Activated T-helper 2 cell treated with anti-CD3 and anti-CD28 coated beads, Interferon-gamma antibody, Interleukin-2, Interleukin-4, amounts not matched to agents 10 μg/mL and 5 μg/mL and 100 μg/mL, durations not matched to agents 14 hours and 24 hours and 36 hours (primary cell): ENCODE measurements at regions of chr3 and their contacts with region 1.

Region 1: GRCh38 chr3:42118762-42119361 is 27.7 kb downstream of the TRAK1 start:
- DNase-seq: no peak
- H3K4me3 Mint-ChIP-seq: no peak overlapping the region
- H3K27ac Mint-ChIP-seq: no peak overlapping the region
- H3K4me1 Mint-ChIP-seq: peaks cover 25% of the 10 kb centered on the region
- H3K27me3 Mint-ChIP-seq: no peaks in the 10 kb centered on the region

Region 2: DNA sequence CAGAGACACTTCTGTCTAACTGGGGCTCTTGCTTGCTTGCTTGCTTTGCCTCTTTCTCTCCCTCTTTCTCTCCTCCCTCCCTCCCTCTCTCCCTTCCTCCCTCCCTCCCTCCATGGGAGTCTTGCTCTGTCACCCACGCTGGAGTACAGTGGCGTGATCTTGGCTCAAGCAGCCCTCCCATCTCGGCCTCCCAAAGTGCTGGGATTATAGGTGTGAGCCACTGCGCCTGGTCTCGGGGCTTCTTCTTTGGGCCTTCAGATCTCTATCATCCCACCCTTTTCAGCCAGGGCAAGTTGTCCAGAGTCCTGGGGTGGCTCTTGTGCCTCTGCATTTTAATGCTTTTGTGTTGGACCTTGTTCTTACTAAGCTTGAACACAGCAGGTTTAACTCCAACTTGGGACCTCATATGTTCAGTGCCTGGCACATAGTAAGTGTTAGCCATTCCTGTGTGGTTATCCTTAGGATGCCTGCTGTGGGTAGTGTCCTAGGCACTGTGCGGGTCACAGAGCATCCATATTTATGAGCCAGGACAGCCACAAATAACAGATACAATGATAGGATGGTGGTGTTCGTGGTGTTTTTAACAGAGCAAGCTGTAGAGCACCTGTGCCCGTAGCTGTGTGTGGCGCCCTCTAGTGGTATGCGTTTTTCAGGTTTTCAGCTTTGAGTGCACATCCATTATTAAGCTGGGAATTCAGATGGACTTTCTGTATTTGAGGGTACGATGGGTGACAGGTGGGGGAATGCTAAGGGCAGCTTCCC is 72.0 kb after region 1 on chr3:
- intact Hi-C with region 1: loop called (anchors 2 kb)
- DNase-seq: peak; percentile 43
- H3K4me3 Mint-ChIP-seq: no peak overlapping the region
- H3K27ac Mint-ChIP-seq: no peak overlapping the region
- H3K4me1 Mint-ChIP-seq: peaks cover 35% of the 10 kb centered on the region
- H3K27me3 Mint-ChIP-seq: no peaks in the 10 kb centered on the region